ENCODE measurements at regions of chr3 and their contacts with region 1.

Region 1: DNA sequence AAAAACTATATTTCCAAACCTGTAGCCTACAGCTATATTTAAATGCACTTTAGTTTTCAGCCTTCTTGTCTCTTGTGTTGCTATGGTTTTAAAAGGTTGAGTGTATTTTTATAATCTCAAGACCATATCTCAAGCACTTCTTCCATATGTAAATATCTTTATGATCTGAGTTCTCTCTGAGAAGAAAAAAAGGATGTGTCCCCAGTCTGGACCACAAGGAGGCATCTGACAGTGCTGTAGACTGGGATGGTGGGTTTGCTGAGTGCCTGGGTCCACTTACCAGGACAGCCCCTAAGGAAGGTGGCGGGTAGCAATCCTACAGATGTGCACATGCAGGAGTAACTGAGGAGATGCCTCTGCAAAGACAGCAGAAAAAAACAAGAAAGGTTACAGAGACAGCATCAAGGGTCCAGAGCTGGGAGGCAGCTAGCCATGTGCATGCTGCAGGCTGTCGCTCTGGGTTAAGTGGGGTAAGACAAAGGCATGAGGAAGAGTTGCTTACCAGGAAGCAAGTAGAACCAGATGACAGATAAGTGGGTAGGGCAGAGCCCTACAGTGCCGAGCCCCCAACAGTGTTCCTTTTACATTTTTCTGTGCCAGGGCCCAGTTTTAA is 70.6 kb upstream of the SNRK start:
- DNase-seq: no peak

Region 2: DNA sequence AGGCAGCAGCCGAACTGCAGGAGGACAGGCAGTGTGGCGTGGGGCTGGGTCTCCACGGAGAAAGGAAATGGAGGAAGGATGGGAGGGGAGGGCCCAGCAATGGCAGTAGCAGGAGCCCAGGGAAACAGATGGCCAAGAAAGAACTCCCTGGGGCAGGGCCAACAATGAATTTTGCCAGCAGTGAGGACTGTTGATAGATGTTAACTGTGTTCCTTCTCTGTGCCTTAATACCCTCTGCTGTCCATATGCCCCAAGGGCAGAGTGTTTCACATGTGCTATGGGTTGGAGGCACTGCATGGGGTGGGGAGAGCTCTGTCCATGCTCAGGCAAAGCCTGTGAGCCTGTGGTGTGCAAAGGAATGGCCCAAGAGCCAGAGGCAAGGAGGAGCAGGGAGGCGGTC is 39.1 kb before region 1 on chr3:
- intact Hi-C with region 1: loop called in 1 of 2 experiments (anchors 2 kb)
- DNase-seq: no peak

Region 3: GRCh38 chr3:43512754-43513404 is 297.1 kb after region 1 on chr3:
- intact Hi-C with region 1: loop called in 1 of 2 experiments (anchors 10 kb)
- DNase-seq: no peak